ENCODE measurements at regions of chr16 and their contacts with region 1.

Region 1: DNA sequence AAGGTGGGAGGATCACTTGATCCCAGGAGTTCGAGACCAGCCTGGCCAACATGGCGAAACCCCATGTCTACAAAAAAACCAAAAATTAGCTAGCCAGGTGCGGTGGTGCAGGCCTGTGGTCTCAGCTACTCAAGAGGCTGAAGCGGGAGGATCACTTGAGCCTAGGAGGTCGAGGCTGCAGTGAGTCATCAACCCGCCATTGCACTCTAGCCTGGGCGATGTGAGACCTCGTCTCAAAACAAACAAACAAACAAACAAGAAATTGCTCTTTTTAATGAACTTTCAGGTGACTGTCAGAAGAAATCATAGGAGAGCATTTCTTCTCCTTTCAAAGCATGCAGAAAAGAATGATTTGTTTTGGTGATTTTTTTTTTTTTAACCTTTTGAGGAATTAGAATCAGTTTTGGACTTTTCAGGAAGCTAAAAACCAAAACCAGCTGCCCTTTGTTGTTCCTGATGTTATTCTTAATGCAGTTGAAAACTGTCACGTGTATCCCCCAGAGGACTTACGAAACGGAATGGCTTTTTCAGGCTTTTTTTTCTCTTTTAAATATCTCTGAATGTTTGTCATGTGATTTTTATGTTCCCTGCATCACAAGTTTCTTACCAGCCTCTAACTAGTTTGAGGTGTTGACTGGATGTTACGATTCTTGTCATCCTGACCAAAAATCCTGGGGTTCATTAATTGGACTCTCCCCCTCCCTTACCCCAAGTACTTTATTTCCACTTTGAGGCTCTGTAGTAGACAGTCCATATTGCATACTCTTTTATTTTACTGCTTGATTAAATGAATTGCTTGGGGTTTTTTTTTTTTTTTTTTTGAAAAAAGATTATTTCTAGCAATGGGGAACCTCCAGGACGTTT is 34.1 kb downstream of the SNX29 start:
- DNase-seq: peak; percentile 75
- ATAC-seq: peak; percentile 60
- H3K4me3 ChIP-seq: peak overlapping the region in 1 of 5 experiments; percentile 44
- H3K4me3 Mint-ChIP-seq: peak overlapping the region; percentile 77
- H3K27ac ChIP-seq: peak overlapping the region; percentile 78 to 81
- H3K27ac Mint-ChIP-seq: peak overlapping the region; percentile 96
- H3K4me1 ChIP-seq: peaks cover 38 to 43% of the 10 kb centered on the region in 2 donors
- H3K4me1 Mint-ChIP-seq: peaks cover 50% of the 10 kb centered on the region
- H3K27me3 ChIP-seq: no peaks in the 10 kb centered on the region
- H3K27me3 Mint-ChIP-seq: no peaks in the 10 kb centered on the region
- CTCF ChIP-seq: no peak

Region 2: GRCh38 chr16:12021578-12022253 is 11.1 kb after region 1 on chr16:
- CTCF ChIA-PET with region 1: interaction called, 16 read pairs
- POLR2A ChIA-PET with region 1: interaction called, 4 read pairs
- intact Hi-C with region 1: loop called (anchors 1 kb)
- DNase-seq: peak; percentile 59
- ATAC-seq: peak; percentile 21
- H3K4me3 ChIP-seq: no peak overlapping the region
- H3K4me3 Mint-ChIP-seq: peak overlapping the region; percentile 53
- H3K27ac ChIP-seq: peak overlapping the region; percentile 49 to 85
- H3K27ac Mint-ChIP-seq: peak overlapping the region; percentile 89
- H3K4me1 ChIP-seq: peaks cover 60 to 78% of the 10 kb centered on the region in 2 donors
- H3K4me1 Mint-ChIP-seq: peaks cover 61% of the 10 kb centered on the region
- H3K27me3 ChIP-seq: no peaks in the 10 kb centered on the region
- H3K27me3 Mint-ChIP-seq: no peaks in the 10 kb centered on the region
- CTCF ChIP-seq: no peak

Region 3: GRCh38 chr16:12257926-12258561 is 247.4 kb after region 1 on chr16:
- CTCF ChIA-PET with region 1: no interaction called
- POLR2A ChIA-PET with region 1: no interaction called
- intact Hi-C with region 1: no loop called
- DNase-seq: no peak
- ATAC-seq: no peak
- H3K4me3 ChIP-seq: no peak overlapping the region
- H3K4me3 Mint-ChIP-seq: no peak overlapping the region
- H3K27ac ChIP-seq: no peak overlapping the region
- H3K27ac Mint-ChIP-seq: no peak overlapping the region
- H3K4me1 ChIP-seq: no peaks in the 10 kb centered on the region
- H3K4me1 Mint-ChIP-seq: peaks cover 29% of the 10 kb centered on the region
- H3K27me3 ChIP-seq: no peaks in the 10 kb centered on the region
- H3K27me3 Mint-ChIP-seq: no peaks in the 10 kb centered on the region
- CTCF ChIP-seq: no peak